Activated T-helper 1 cell treated with anti-CD3 and anti-CD28 coated beads, Interleukin-12 subunit alpha, Interleukin-12 subunit beta, Interleukin-2, Interleukin-4 antibody, amounts not matched to agents 30 ng/mL and 10 ng/mL and 1 ng/mL, durations not matched to agents 14 hours and 24 hours and 36 hours (primary cell): ENCODE measurements at regions of chr10 and their contacts with region 1.

Region 1: GRCh38 chr10:87882555-87883294 is 19.3 kb downstream of the PTEN start:
- DNase-seq: no peak
- H3K4me3 Mint-ChIP-seq: no peak overlapping the region
- H3K27ac Mint-ChIP-seq: no peak overlapping the region
- H3K4me1 Mint-ChIP-seq: peaks cover 19% of the 10 kb centered on the region
- H3K27me3 Mint-ChIP-seq: no peaks in the 10 kb centered on the region

Region 2: GRCh38 chr10:87868277-87868676 is 14.4 kb before region 1 on chr10:
- intact Hi-C with region 1: loop called (anchors 2 kb)
- DNase-seq: no peak
- H3K4me3 Mint-ChIP-seq: peak overlapping the region; percentile 72
- H3K27ac Mint-ChIP-seq: no peak overlapping the region
- H3K4me1 Mint-ChIP-seq: peaks cover 59% of the 10 kb centered on the region
- H3K27me3 Mint-ChIP-seq: no peaks in the 10 kb centered on the region

Region 3: GRCh38 chr10:87895430-87895829 is 12.7 kb after region 1 on chr10:
- intact Hi-C with region 1: no loop called
- DNase-seq: no peak
- H3K4me3 Mint-ChIP-seq: no peak overlapping the region
- H3K27ac Mint-ChIP-seq: no peak overlapping the region
- H3K4me1 Mint-ChIP-seq: peaks cover 18% of the 10 kb centered on the region
- H3K27me3 Mint-ChIP-seq: no peaks in the 10 kb centered on the region